PC-9 (cell line): ENCODE measurements at regions of chr3 and their contacts with region 1.

Region 1: DNA sequence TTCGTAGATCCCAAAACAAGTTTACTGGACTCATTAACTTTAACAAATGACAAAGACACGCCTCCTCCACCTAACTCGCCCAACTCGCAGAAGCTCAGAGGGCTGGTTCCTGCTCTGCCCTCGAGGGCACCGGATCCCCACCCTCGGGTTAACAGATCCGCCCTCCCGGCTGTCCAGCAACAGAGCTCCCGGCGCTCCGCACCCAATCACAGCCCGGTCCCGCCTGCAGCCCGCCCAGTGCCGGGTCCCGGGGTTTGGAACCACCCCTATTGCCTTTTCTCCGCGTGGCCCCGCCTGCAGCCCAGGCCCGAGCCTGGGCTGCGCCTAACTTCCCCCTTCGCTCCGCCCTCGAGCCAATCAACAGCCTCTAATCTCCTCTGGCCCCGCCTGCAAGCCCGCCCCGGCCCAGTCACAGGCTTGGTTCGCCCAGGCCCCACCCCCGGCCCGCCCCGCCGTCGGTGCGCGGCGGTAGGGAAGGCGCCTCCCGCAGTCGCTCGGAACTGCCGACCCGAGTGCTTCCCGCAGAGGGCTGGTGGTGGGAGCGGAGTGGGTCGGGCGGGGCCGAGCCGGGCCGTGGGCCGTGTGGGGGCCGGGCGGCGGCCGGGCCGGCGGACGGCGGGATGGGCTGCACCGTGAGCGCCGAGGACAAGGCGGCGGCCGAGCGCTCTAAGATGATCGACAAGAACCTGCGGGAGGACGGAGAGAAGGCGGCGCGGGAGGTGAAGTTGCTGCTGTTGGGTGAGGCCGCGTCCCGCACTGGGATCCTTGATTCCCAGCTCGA is at the start of gene GNAI2:
- DNase-seq: peak; percentile 91 to 99
- H3K4me3 ChIP-seq: peak within 1 kb of the TSS; percentile 66
- H3K27ac ChIP-seq: no peak within 1 kb of the TSS
- H3K4me1 ChIP-seq: peaks cover 24% of the 10 kb centered on the region
- H3K27me3 ChIP-seq: no peaks in the 10 kb centered on the region
- CTCF ChIP-seq: no peak
- total RNA-seq, gene GNAI2: 156 and 201 TPM in 2 replicates

Region 2: GRCh38 chr3:50245831-50246516 is 10.1 kb after region 1 on chr3:
- CTCF ChIA-PET with region 1: interaction called, 22 read pairs
- POLR2A ChIA-PET with region 1: interaction called, 10 read pairs
- intact Hi-C with region 1: no loop called
- DNase-seq: peak; percentile 64 to 91
- H3K4me3 ChIP-seq: peak overlapping the region; percentile 6; the same call in 1 of the 2 replicates
- H3K27ac ChIP-seq: peak overlapping the region; percentile 84
- H3K4me1 ChIP-seq: peaks cover 33% of the 10 kb centered on the region
- H3K27me3 ChIP-seq: no peaks in the 10 kb centered on the region
- CTCF ChIP-seq: peak; percentile 96

Region 3: DNA sequence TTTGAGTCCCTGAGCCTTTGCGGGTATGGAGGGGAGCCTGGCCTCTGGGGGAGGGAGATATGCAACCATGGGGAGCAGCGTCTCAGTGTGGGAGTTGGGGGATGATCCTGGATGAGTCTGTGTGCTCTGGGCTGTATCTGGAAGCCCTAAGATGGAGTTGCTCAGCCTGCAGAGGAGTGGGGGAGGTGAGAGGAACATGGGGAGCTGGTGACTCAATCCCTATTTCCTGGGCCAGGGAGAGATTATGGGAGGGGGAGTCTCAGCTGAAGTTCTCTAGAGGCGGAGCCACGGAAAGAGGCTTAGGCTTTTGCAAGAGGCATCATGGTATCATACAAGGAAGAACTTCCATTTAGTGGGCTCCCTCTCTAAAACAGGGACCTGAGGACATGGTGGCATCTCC is 182.9 kb after region 1 on chr3:
- CTCF ChIA-PET with region 1: no interaction called
- POLR2A ChIA-PET with region 1: no interaction called
- intact Hi-C with region 1: no loop called
- DNase-seq: no peak
- H3K4me3 ChIP-seq: no peak overlapping the region
- H3K27ac ChIP-seq: no peak overlapping the region
- H3K4me1 ChIP-seq: no peaks in the 10 kb centered on the region
- H3K27me3 ChIP-seq: no peaks in the 10 kb centered on the region; the same call in 1 of the 2 replicates
- CTCF ChIP-seq: no peak

Region 4: GRCh38 chr3:51670823-51671733 is 1435.2 kb after region 1 on chr3 and contains the start of gene TEX264:
- CTCF ChIA-PET with region 1: no interaction called
- POLR2A ChIA-PET with region 1: interaction called, 10 read pairs
- intact Hi-C with region 1: no loop called
- DNase-seq: peak; percentile 61 to 93
- H3K4me3 ChIP-seq: peak within 1 kb of the TSS; percentile 82
- H3K27ac ChIP-seq: peak within 1 kb of the TSS; percentile 47; the same call in 1 of the 2 replicates
- H3K4me1 ChIP-seq: peaks cover 18% of the 10 kb centered on the region
- H3K27me3 ChIP-seq: no peaks in the 10 kb centered on the region
- CTCF ChIP-seq: no peak
- total RNA-seq, gene TEX264: 44.3 and 53.0 TPM in 2 replicates